Naive thymus-derived CD4-positive, alpha-beta T cell (primary cell): ENCODE measurements at regions of chr20 and their contacts with region 1.

Region 1: DNA sequence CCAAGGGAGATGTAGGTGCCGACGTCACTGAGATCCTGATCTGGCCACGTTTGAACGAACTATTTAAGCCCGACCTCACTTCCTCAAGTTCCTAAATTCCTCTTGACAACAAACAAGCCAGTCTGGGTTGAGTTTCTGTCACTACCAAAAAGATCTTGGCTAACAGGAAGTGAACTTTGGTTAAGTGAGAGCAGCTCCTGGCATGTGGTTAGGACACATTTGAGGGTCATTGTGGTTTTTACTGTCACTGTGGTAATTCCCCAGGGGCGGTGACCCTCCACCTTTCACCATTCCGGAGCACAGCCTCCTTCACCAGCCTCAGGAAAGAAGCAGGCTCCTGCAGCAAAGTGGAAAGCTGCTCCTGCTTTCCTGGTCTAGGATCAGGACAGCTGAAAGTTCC is 43.1 kb upstream of the ZNF831 start:
- DNase-seq: peak in 7 of 9 donors; percentile 23 to 48 (median 35)
- ATAC-seq: peak; percentile 40
- H3K4me3 ChIP-seq: no peak overlapping the region
- H3K4me3 Mint-ChIP-seq: peak overlapping the region; percentile 33 to 96 (median 56)
- H3K27ac ChIP-seq: peak overlapping the region; percentile 94
- H3K27ac Mint-ChIP-seq: peak overlapping the region; percentile 64 to 100 (median 100)
- H3K4me1 ChIP-seq: peaks cover 60 to 84% of the 10 kb centered on the region in 2 donors
- H3K4me1 Mint-ChIP-seq: peaks cover 51 to 98% (median 90%) of the 10 kb centered on the region in 7 donors
- H3K27me3 ChIP-seq: no peaks in the 10 kb centered on the region
- H3K27me3 Mint-ChIP-seq: no peaks in the 10 kb centered on the region

Region 2: DNA sequence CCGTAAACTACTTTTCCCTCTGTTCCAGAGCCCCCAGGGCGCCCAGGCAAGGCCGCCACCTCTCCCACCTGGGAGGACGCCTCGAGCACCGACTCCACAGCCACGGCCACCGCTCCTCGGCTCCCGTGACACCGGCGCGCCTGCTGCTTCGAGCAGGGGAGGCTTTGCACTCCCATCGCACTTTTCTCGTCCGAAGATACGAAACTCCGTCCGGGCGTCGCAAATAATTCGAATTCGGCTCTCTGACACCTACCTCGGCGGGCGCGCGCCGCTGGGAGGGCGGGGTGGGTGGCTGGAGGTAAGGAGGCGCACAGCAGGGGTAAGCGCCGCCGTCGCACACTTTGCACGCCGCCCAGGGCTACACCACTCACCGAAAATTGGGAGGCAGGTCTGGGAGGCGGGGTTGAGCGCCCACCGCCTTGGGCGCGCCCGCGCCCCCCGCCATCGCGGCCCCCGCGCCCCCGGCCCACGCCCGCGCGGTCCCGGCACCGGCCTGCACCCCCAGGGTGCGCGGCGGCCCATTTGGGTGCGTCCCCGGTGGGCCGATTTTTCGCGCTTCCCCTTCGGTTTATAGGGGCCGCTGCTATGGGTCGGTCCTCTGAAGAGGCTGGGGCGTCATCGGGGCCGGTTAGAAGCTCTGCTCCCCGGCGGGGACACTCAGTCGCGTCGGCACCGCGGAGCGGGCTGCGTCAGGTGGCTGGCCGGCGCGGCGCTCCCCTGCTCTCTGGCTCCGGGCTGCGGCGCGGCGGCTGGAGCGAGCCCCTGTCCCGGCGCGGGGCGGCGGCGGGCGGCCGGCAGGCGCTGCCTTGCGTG is 231.8 kb before region 1 on chr20:
- CTCF ChIA-PET with region 1: no interaction called
- POLR2A ChIA-PET with region 1: interaction called, 13 read pairs
- intact Hi-C with region 1: loop called in 1 of 2 experiments (anchors 1 kb)
- DNase-seq: peak; percentile 64 to 91 (median 86)
- ATAC-seq: peak; percentile 76
- H3K4me3 ChIP-seq: peak overlapping the region; percentile 68
- H3K4me3 Mint-ChIP-seq: peak overlapping the region; percentile 81 to 94 (median 87)
- H3K27ac ChIP-seq: peak overlapping the region; percentile 95
- H3K27ac Mint-ChIP-seq: peak overlapping the region; percentile 67 to 97 (median 90)
- H3K4me1 ChIP-seq: peaks cover 4 to 6% of the 10 kb centered on the region in 2 donors
- H3K4me1 Mint-ChIP-seq: peaks cover 15 to 46% (median 37%) of the 10 kb centered on the region in 7 donors
- H3K27me3 ChIP-seq: no peaks in the 10 kb centered on the region
- H3K27me3 Mint-ChIP-seq: peaks cover 0 to 3% (median 0%) of the 10 kb centered on the region in 5 donors

Region 3: GRCh38 chr20:59094576-59094975 is 25.9 kb before region 1 on chr20:
- CTCF ChIA-PET with region 1: interaction called, 33 read pairs
- POLR2A ChIA-PET with region 1: interaction called, 15 read pairs
- intact Hi-C with region 1: no loop called
- DNase-seq: no peak
- ATAC-seq: no peak
- H3K4me3 ChIP-seq: no peak overlapping the region
- H3K4me3 Mint-ChIP-seq: no peak overlapping the region
- H3K27ac ChIP-seq: no peak overlapping the region
- H3K27ac Mint-ChIP-seq: peak overlapping the region in 1 of 9 donors; percentile 19
- H3K4me1 ChIP-seq: no peaks in the 10 kb centered on the region
- H3K4me1 Mint-ChIP-seq: peaks cover 0 to 10% (median 5%) of the 10 kb centered on the region in 7 donors
- H3K27me3 ChIP-seq: no peaks in the 10 kb centered on the region
- H3K27me3 Mint-ChIP-seq: peaks cover 0 to 12% (median 0%) of the 10 kb centered on the region in 5 donors

Region 4: DNA sequence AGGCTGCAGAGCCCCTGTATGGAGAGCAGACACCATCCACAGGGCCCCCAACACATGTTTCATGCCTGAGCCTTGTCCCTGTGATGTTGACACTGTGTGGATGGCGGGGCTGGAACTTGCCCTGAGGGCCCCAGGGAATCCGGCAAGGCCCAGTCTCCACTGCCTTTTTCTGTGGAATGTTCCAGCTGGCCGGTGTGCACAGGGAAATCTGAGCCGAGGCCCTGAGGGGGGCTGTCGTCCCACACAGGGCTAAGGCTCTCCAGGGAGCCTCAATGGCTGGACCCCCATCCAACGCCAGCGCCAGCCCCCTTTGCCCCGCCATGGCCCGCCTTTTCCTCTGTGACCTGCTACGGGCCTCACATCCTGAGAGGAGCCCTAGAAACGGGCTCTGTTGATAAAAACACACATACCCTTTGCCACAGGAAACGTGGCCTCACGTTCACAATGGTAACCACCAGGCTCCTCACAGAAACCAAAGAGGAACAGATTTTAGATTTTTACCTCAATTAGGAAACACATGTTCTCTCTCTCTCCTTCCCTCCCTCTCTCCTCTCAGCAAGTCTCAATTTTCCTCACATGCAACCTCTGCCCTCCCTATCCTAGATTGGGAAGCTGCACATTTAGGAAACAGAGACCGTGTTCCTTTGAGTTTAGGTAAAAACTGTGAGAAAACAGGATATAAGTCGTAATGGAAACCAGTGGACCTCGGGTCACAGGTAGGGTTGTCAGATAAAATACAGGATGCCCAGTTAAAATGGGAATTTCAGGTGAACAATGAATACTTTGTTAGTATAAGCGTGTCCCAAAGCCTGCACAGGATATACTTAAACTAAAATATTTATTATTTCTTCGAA is 29.4 kb after region 1 on chr20:
- CTCF ChIA-PET with region 1: interaction called, 18 read pairs
- POLR2A ChIA-PET with region 1: interaction called, 172 read pairs
- intact Hi-C with region 1: loop called (anchors 1 kb)
- DNase-seq: peak; percentile 51 to 93 (median 88)
- ATAC-seq: peak; percentile 91
- H3K4me3 ChIP-seq: peak overlapping the region; percentile 33
- H3K4me3 Mint-ChIP-seq: peak overlapping the region; percentile 56 to 91 (median 82)
- H3K27ac ChIP-seq: peak overlapping the region; percentile 98
- H3K27ac Mint-ChIP-seq: peak overlapping the region; percentile 96 to 100 (median 99)
- H3K4me1 ChIP-seq: peaks cover 83% of the 10 kb centered on the region in 2 donors
- H3K4me1 Mint-ChIP-seq: peaks cover 53 to 98% (median 94%) of the 10 kb centered on the region in 7 donors
- H3K27me3 ChIP-seq: no peaks in the 10 kb centered on the region
- H3K27me3 Mint-ChIP-seq: no peaks in the 10 kb centered on the region

Region 5: DNA sequence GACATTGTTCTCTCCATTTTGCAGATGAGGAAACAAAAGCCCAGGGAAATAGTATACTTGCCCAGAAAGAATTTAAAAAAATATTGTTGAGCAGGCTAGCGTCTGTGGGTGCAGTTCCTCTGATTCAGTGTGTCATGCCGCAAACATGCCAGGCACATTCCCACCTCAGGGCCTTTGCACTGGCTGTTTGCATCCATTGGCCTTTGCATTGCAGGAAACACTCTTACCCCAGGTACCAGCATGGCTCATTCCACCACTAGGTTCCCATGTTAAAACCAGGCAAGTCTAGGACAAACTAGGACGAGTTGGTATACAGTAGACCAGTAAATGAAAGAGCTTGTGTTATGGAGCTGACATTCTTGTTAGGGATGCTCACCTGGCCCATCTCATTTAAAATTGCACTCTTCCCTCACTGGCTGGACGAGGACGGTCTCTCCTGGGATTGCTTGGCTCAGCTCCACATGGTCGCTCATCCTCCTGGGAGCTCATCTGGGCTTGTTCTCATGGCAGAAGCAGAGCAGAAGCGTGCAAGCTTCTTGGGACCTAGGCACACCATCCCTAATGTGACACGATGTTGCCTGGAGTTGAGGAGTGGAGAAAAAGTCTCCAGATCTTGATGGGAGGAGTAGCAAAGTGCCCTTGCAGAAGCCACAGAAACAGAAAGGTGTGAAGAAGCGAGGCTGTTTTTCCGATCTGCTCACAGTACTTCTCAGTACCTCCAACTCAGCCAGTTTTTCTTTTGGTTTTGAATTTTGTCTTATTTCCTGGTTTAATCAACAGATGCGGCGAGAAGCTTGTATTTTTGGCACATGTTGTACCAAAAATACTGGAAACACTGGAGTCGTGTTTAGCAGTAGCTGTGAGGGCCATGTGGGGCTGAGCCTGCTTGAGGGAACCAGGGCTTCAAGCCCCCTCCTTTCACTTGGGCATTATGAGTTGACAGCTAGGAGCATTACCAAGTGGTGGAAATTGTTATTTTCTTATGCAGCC is 57.1 kb after region 1 on chr20:
- CTCF ChIA-PET with region 1: interaction called, 9 read pairs
- POLR2A ChIA-PET with region 1: interaction called, 18 read pairs
- intact Hi-C with region 1: no loop called
- DNase-seq: peak in 4 of 9 donors; percentile 28 to 46 (median 32)
- ATAC-seq: peak; percentile 75
- H3K4me3 ChIP-seq: peak overlapping the region; percentile 32
- H3K4me3 Mint-ChIP-seq: peak overlapping the region; percentile 40 to 83 (median 74)
- H3K27ac ChIP-seq: peak overlapping the region; percentile 71
- H3K27ac Mint-ChIP-seq: peak overlapping the region; percentile 86 to 96 (median 91)
- H3K4me1 ChIP-seq: peaks cover 72 to 81% of the 10 kb centered on the region in 2 donors
- H3K4me1 Mint-ChIP-seq: peaks cover 51 to 97% (median 88%) of the 10 kb centered on the region in 7 donors
- H3K27me3 ChIP-seq: no peaks in the 10 kb centered on the region
- H3K27me3 Mint-ChIP-seq: no peaks in the 10 kb centered on the region

Region 6: DNA sequence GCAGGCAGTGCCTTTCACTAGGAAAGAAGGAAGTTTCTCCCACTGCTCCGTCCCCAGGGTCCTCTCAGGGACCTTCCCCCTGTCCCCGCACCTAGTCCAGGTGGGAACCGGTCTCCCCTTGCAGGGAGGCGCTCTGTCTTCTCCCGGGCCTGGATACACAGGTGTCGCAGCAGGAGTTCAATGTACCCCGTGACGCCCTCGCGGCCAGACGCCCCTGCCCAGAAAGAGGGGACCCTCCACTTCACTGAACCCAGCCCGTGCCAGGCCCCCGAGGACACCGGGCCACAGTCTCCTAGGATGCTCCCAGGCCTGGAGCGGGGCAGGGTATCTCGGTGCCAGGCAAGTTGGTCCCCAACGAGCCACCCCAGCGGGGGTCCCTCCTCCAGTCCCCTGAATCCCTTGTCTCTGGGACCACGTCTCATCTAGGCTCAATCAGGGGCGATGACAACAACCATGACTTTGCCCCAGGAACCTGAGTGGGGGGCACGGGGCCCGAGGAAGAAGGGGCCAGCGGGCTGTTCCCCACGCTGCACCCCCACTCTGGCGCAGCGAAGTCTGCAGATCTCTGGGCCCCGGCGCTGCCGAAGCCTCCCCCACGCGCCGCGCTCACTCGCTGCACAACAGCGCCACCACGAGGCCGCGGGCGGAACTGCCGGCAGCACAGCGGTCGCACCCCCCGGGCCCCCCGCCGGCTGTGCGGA is 282.9 kb after region 1 on chr20:
- CTCF ChIA-PET with region 1: no interaction called
- POLR2A ChIA-PET with region 1: interaction called, 3 read pairs
- intact Hi-C with region 1: loop called in 1 of 2 experiments (anchors 1 kb)
- DNase-seq: peak; percentile 65 to 91 (median 77)
- ATAC-seq: peak; percentile 93
- H3K4me3 ChIP-seq: peak overlapping the region; percentile 53
- H3K4me3 Mint-ChIP-seq: peak overlapping the region in 1 of 10 donors; percentile 59
- H3K27ac ChIP-seq: peak overlapping the region; percentile 41
- H3K27ac Mint-ChIP-seq: peak overlapping the region in 4 of 9 donors; percentile 49 to 94 (median 85)
- H3K4me1 ChIP-seq: peaks cover 12 to 35% of the 10 kb centered on the region in 2 donors
- H3K4me1 Mint-ChIP-seq: peaks cover 0 to 4% (median 2%) of the 10 kb centered on the region in 7 donors
- H3K27me3 ChIP-seq: peaks cover 0 to 7% of the 10 kb centered on the region in 2 donors
- H3K27me3 Mint-ChIP-seq: peaks cover 0 to 18% (median 3%) of the 10 kb centered on the region in 5 donors